Psoas muscle (tissue), 8 donors: ENCODE measurements at regions of chr2 and their contacts with region 1.

Region 1: DNA sequence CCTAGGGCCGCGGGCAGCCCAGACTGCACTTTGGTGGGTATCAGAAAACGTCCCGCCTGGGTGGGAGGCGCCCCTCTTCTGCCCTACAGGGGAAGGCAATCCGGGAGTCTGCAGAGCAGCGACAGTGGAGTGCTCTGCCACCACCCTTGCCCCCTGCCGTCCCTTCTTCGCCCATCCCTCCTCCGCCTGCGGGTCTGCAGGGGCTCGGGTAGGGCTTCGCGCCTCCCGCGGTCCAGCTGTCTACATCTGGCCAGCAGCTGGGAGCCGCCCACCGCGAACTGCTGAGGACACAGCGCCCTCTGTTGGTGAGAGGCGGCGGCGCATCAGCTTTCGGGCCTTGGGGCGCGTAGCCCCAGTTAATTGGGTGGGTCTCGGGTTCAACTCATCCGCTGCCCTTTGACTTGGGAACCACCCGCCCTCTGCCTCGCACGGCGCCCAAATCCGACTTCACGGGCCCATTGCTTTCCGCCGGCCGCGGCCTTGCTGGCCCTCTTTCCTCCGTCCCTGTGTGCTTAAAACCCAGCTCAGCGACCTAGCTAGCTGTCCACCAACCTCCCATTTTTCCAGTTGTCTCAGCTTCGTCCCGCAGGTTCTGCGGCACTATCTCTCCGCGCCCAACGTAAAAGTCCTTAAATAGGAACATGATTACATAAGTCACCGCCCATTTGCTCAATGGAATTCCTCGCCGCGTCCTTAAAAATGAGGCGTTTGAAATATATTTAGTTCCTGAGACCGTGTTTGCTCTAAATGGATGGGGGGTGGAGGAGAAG is 17.6 kb downstream of the WNT10A start:
- DNase-seq: peak; percentile 69 to 85
- ATAC-seq: peak; percentile 66 to 92 (median 84)
- H3K4me3 ChIP-seq: no peak overlapping the region
- H3K27ac ChIP-seq: no peak overlapping the region
- H3K4me1 ChIP-seq: peaks cover 1% of the 10 kb centered on the region
- H3K27me3 ChIP-seq: peaks cover 0 to 95% (median 26%) of the 10 kb centered on the region in 3 donors
- CTCF ChIP-seq: peak; percentile 95

Region 2: GRCh38 chr2:218047536-218048225 is 850.6 kb before region 1 on chr2:
- intact Hi-C with region 1: no loop called
- DNase-seq: no peak
- ATAC-seq: no peak
- H3K4me3 ChIP-seq: no peak overlapping the region
- H3K27ac ChIP-seq: no peak overlapping the region
- H3K4me1 ChIP-seq: no peaks in the 10 kb centered on the region
- H3K27me3 ChIP-seq: no peaks in the 10 kb centered on the region
- CTCF ChIP-seq: no peak

Region 3: GRCh38 chr2:218852911-218853667 is 45.2 kb before region 1 on chr2:
- intact Hi-C with region 1: loop called (anchors 2 to 5 kb)
- DNase-seq: peak; percentile 55 to 75
- ATAC-seq: peak; percentile 75 to 87 (median 76)
- H3K4me3 ChIP-seq: no peak overlapping the region
- H3K27ac ChIP-seq: no peak overlapping the region
- H3K4me1 ChIP-seq: no peaks in the 10 kb centered on the region
- H3K27me3 ChIP-seq: peaks cover 0 to 30% (median 3%) of the 10 kb centered on the region in 3 donors
- CTCF ChIP-seq: peak; percentile 69

Region 4: DNA sequence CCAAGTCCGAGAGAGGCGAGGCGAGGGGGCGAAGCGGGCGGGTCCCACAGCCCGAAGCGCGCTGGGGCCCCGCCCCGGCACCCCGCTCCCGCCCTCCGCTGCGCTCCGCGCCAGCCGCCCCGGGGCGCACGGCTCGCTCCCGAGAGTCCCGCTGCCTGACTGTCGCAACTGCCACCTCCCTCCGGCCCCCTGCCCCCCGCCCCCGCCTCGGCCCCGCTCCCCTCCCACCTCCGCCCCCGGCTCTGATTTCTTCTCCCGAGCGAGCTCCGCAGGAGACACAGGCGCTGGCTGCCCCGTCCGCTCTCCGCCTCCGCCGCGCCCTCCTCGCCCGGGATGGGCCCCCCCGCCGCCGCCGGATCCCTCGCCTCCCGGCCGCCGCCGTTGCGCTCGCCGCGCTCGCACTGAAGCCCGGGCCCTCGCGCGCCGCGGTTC is 38.7 kb before region 1 on chr2 and contains the start of gene WNT6:
- intact Hi-C with region 1: loop called (anchors 2 to 5 kb)
- DNase-seq: peak in 1 of 2 donors; percentile 57
- ATAC-seq: peak in 2 of 4 donors; percentile 35 to 52
- H3K4me3 ChIP-seq: peak within 1 kb of the TSS; percentile 52
- H3K27ac ChIP-seq: no peak within 1 kb of the TSS
- H3K4me1 ChIP-seq: peaks cover 8% of the 10 kb centered on the region
- H3K27me3 ChIP-seq: peaks cover 0 to 51% (median 15%) of the 10 kb centered on the region in 3 donors
- CTCF ChIP-seq: no peak
- total RNA-seq, gene WNT6: 0.12 to 1.0 (median 0.48) TPM

Region 5: GRCh38 chr2:218876562-218877219 is 21.6 kb before region 1 on chr2:
- intact Hi-C with region 1: loop called (anchors 2 kb)
- DNase-seq: peak in 1 of 2 donors; percentile 67
- ATAC-seq: peak; percentile 61 to 76 (median 69)
- H3K4me3 ChIP-seq: no peak overlapping the region
- H3K27ac ChIP-seq: no peak overlapping the region
- H3K4me1 ChIP-seq: peaks cover 5% of the 10 kb centered on the region
- H3K27me3 ChIP-seq: peaks cover 0 to 85% (median 35%) of the 10 kb centered on the region in 3 donors
- CTCF ChIP-seq: peak; percentile 94